Colonic mucosa (tissue), 4 donors: ENCODE measurements at regions of chr16 and their contacts with region 1.

Region 1: GRCh38 chr16:48353565-48354163 is 31.5 kb downstream of the SIAH1 start:
- DNase-seq: peak; percentile 65
- H3K4me3 ChIP-seq: no peak overlapping the region
- H3K27ac ChIP-seq: no peak overlapping the region
- H3K4me1 ChIP-seq: no peaks in the 10 kb centered on the region
- H3K27me3 ChIP-seq: no peaks in the 10 kb centered on the region
- CTCF ChIP-seq: peak; percentile 88

Region 2: DNA sequence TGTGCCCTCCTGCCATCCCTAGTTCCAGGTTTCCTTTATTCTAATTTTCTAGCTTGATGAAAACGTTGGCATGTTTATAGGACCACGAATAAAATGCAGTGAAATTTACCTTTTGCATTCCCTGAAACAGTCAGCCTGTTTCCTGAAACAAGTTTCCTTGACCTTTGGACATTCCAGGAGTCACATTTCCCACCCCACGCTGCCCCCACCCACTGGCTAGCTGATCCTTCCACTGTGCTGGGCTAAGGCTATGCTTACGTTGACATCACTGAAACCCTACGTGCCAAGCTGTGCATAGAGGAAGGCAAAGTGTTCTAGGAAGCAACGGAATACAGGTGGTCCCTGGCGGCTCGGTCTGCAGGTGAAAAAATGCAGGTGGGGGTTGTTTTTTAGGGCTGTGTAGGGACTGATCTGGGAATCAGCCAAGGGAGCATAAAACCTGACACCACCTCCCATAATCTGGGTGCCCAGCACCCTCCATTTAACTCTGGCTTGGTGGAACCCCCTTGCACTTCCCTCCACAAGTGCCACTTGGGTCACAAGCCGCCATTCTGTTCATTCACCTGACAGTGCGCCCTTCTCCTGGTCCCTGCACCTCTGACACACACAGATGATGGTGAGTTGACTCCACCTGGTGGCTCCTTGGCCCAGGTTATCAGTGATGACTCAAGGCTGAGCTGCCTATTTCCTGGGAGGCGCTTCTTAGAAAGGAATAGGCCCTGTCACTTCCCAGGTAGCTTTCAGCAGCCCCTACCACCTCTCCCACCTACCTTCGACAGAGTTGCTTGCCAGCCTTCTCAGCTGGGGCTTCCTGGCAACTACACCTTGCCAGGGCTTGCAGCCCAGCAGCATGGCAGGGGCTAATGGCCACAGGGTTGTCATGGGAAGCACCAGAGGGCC is 172.6 kb after region 1 on chr16:
- intact Hi-C with region 1: loop called (anchors 5 kb)
- DNase-seq: peak; percentile 80
- H3K4me3 ChIP-seq: no peak overlapping the region
- H3K27ac ChIP-seq: no peak overlapping the region
- H3K4me1 ChIP-seq: no peaks in the 10 kb centered on the region
- H3K27me3 ChIP-seq: no peaks in the 10 kb centered on the region
- CTCF ChIP-seq: peak; percentile 37

Region 3: GRCh38 chr16:48542020-48542473 is 188.4 kb after region 1 on chr16:
- intact Hi-C with region 1: loop called (anchors 5 kb)
- DNase-seq: peak; percentile 57
- H3K4me3 ChIP-seq: no peak overlapping the region
- H3K27ac ChIP-seq: no peak overlapping the region
- H3K4me1 ChIP-seq: peaks cover 4% of the 10 kb centered on the region
- H3K27me3 ChIP-seq: no peaks in the 10 kb centered on the region
- CTCF ChIP-seq: peak; percentile 36

Region 4: GRCh38 chr16:48628359-48628985 is 274.8 kb after region 1 on chr16:
- intact Hi-C with region 1: loop called (anchors 2 kb)
- DNase-seq: no peak
- H3K4me3 ChIP-seq: no peak overlapping the region
- H3K27ac ChIP-seq: no peak overlapping the region
- H3K4me1 ChIP-seq: peaks cover 4% of the 10 kb centered on the region
- H3K27me3 ChIP-seq: no peaks in the 10 kb centered on the region
- CTCF ChIP-seq: no peak